ENCODE measurements at regions of chr5 and their contacts with region 1.

Region 1: DNA sequence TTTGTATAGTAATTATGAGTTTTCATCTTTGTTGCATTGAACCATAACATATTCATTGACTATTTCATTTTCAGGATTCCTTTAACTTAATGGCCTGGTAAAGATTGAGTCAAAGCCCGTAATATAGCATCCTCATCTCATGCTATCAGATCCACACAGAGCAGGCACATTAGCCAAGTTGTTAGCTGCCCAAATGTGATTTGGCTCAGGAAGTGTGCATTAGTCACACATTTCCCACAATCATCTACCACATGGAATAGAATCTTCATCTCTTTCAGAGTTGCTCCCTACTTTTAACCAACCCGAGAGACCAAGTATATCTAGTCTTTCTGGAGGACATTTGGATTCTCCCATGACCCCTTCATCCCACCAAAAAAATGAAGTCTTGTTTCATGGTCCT is 481.0 kb upstream of the PTGER4 start:
- DNase-seq: no peak
- ATAC-seq: no peak

Region 2: DNA sequence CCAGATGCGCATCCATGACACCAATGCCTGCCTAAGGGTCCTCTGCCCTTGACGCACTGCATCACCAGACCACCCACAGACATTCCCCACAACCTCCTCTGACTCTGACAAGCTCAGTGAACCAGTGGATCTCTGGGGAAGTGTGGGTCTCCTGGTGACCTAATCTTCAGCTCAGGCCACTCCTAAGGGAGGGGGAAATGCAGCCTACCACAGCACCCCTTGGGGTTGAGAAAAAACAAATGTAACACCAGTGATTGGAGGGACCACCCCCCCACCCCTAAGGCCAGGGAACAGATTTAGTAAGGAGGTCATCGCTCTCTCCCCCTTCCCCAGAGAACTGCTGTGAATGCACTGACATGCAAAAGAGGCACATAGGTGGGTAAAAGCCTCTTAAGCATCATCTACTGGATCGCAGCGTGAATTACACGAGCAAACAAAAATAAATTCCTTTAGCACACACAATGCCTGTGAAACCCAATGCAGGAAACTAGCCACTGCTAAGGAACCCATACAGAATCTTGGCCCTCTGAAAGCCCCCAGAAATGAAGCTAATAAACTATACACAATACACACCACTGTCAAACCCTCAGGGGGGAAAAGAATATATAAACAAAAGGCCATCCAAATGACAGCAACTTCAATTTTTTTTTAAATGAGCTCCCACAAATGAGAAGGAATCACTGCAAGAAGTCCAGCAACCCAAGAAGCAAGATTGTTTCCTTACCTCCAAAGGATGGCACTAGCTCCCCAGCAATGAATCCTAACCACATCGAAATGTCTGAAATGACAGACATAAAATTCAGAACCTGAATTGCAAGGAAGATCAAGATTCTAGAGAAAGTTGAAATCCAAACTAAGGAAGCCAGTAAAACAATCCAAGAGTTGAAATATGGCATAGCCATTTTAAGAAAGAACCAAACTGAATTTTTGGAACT is 32.7 kb before region 1 on chr5:
- intact Hi-C with region 1: no loop called
- DNase-seq: no peak
- ATAC-seq: no peak

Region 3: GRCh38 chr5:41067714-41068568 is 869.2 kb after region 1 on chr5:
- intact Hi-C with region 1: loop called (anchors 5 kb)
- DNase-seq: no peak
- ATAC-seq: no peak

Measured in sciatic nerve (tissue), 2 donors.